WTC11 (cell line): ENCODE measurements at regions of chr7 and their contacts with region 1.

Region 1: GRCh38 chr7:1555809-1556540 is at the start of gene TMEM184A:
- DNase-seq: peak; percentile 74
- ATAC-seq: peak; percentile 79
- H3K4me3 Mint-ChIP-seq: no peak within 1 kb of the TSS
- H3K27ac Mint-ChIP-seq: no peak within 1 kb of the TSS; the same call in 1 of the 2 replicates
- H3K4me1 Mint-ChIP-seq: peaks cover 5% of the 10 kb centered on the region
- H3K27me3 Mint-ChIP-seq: no peaks in the 10 kb centered on the region
- CTCF ChIP-seq: no peak
- total RNA-seq, gene TMEM184A: 1.3 to 1.4 TPM (median 1.3 TPM) in 3 replicates

Region 2: DNA sequence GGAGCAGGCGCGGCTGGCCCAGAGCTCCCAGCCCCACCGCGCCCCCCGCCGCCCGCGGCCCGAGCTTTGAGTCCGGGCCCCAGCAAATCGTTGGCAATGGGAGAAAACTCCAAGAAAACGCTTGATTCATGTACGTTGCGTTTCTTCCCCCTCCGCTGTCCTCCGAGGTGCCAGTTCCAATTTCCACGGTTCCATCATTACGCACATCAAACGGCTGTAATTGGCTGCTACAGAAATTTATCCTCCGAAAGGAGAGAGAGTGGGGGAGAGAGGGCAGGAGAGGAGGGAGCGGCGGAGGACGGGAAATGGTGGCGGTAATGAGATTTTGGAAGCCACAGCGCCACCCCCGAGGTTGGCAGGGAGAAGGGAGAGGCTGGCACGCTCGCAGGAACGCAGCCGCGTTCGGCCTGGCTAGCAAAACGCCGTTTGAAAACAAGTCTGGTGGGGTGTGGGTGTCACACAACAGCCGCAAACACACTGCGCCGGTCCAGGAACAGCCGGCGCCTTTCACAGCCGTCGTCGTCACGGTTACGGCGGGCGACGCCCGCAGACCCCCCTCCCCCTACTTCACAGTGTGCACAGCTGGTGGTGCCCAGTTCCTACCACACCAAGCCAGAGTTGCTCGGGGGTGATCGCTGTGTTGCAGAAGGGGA is 265.8 kb before region 1 on chr7:
- CTCF ChIA-PET with region 1: no interaction called
- POLR2A ChIA-PET with region 1: no interaction called
- DNase-seq: no peak
- ATAC-seq: peak; percentile 51
- H3K4me3 Mint-ChIP-seq: peak overlapping the region; percentile 67
- H3K27ac Mint-ChIP-seq: no peak overlapping the region
- H3K4me1 Mint-ChIP-seq: no peaks in the 10 kb centered on the region
- H3K27me3 Mint-ChIP-seq: peaks cover 33% of the 10 kb centered on the region
- CTCF ChIP-seq: no peak

Region 3: DNA sequence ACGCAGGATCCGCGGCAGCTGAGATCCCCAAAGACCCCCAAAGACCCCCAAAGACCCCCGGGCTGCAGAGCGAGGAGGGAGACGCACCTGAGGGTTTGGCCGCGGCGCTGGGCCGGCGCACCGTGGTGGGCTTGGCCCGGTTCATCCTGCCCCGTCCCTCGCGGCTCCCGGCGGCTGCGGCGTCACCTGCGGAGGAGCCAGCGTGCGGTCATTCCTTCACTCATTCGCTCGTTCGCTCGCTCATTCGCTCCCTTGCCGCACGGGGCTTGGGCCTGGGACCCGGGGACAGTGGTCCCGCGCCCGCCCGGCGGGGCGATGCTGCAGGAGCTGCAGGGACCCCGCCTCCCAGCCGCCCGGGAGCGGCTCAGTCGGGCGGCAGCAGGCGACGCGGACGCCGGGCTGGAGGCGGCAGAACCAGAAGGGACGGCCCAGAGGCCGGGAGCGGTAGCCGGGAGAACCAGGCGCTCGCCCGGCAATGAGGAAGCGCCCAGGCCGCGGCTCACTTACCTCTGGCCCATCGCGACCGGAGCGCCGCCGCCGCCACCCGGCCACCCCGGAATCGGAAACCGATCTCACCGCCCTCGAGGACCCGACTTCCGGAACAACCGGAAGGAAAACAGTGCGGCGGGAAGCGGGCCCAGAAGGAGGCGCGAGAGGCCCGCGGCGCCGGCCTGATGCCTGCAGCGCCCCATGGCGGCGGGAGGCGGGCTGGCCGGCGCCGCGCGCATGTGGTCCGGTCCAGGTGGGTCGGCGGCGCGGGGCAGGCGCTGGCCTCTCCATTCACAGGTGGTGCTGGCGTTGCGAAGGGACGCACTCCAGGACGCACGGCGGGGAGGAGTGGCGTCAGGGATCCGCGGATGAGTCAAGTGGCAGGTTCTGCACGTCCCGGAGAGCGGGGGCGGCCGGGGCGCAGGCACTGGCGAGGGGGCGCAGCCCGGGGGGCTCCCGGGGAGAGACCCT is 51.9 kb before region 1 on chr7 and contains the start of gene INTS1:
- CTCF ChIA-PET with region 1: interaction called, 27 read pairs
- POLR2A ChIA-PET with region 1: no interaction called
- DNase-seq: peak; percentile 87
- ATAC-seq: peak; percentile 93
- H3K4me3 Mint-ChIP-seq: peak within 1 kb of the TSS; percentile 85
- H3K27ac Mint-ChIP-seq: peak within 1 kb of the TSS; percentile 36; the same call in 1 of the 2 replicates
- H3K4me1 Mint-ChIP-seq: peaks cover 18% of the 10 kb centered on the region
- H3K27me3 Mint-ChIP-seq: no peaks in the 10 kb centered on the region
- CTCF ChIP-seq: peak; percentile 64; the same call in 1 of the 2 replicates
- total RNA-seq, gene INTS1: 143 to 161 TPM (median 150 TPM) in 3 replicates

Region 4: GRCh38 chr7:1537535-1538412 is 18.2 kb before region 1 on chr7:
- CTCF ChIA-PET with region 1: interaction called, 20 read pairs
- POLR2A ChIA-PET with region 1: interaction called, 3 read pairs
- DNase-seq: peak; percentile 61
- ATAC-seq: no peak
- H3K4me3 Mint-ChIP-seq: no peak overlapping the region
- H3K27ac Mint-ChIP-seq: peak overlapping the region; percentile 87
- H3K4me1 Mint-ChIP-seq: peaks cover 20% of the 10 kb centered on the region
- H3K27me3 Mint-ChIP-seq: no peaks in the 10 kb centered on the region
- CTCF ChIP-seq: no peak

Region 5: DNA sequence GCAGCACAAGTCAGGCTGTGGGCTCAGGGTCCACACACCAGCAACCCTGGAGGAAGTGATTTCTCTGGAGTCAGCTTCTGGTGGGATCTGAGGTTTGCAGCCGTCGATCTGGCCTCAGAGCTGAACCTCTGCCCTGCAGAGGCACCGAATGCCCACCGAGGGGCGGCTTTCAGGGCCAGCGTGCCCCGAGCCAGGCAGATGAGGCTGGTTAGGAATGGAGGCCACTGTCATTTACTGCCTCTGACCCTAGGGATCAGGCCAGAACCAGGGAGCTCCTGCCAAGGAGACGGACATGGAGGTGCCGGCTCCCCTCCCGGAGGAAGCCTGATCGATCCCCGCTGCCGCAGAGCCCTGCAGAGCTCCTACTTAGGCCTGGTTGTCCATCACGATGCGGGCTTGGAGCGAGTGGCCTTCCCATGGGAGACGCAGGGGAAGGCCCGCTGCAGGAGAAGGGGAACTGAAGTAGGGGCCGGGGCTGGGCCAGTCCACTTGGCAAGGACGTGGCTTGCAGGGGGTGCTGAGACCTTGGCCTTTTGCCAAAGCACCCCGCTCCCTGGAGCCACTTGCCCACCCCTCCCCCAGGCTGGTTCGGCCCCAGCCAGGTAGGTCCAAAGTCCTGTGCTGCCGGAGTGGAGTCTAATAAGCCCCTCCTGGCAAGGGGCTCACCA is 94.5 kb after region 1 on chr7:
- CTCF ChIA-PET with region 1: no interaction called
- POLR2A ChIA-PET with region 1: no interaction called
- DNase-seq: no peak
- ATAC-seq: no peak
- H3K4me3 Mint-ChIP-seq: no peak overlapping the region
- H3K27ac Mint-ChIP-seq: no peak overlapping the region
- H3K4me1 Mint-ChIP-seq: no peaks in the 10 kb centered on the region
- H3K27me3 Mint-ChIP-seq: no peaks in the 10 kb centered on the region
- CTCF ChIP-seq: no peak